ENCODE measurements at regions of chr18 and their contacts with region 1.

Region 1: DNA sequence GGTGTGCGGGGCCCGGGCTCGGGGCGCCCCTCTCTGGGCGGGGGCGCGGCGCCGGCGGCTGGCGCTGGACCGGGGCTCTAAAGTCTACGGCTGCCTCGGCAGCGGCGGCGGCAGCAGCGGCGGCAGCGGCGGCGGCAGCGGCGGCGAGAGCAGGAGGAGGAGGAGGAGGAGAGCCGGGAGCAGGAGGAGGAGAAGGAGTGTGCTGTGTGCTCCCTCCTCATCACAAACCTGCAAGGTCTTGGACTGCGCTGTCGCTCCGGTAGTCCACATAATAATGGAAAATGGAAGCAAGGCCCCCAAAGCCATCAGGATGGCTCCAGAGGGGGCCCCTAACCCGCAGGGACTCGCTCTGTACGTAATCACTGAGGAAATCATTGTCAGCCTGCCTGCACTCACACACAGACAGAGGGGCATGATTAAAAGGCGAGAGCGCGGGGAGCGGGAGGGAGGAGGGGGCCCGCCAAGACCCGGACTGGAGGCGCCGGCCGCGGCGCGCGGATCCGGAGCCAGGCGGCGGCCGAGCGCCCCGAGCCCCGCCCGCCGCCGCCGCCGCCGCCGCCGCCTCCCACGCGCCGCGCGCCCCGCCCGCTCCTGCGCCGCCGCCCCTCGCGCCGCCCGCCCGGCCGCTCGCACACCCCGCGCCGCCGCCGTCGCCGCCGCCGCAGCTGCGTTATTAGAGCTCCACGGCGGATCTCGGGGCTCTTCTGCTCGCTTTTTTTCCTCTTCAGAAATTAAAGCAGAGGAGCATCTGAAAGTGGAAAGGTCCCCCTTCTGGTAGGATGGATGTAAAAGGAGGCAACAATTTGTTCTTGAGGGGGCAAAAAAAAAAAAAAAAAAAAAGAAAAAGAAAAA is at the start of gene ZNF521:
- DNase-seq: peak; percentile 93
- H3K4me3 ChIP-seq: peak within 1 kb of the TSS; percentile 90 to 100 (median 99)
- H3K27ac ChIP-seq: peak within 1 kb of the TSS; percentile 98
- H3K4me1 ChIP-seq: peaks cover 33% of the 10 kb centered on the region
- H3K27me3 ChIP-seq: no peaks in the 10 kb centered on the region
- CTCF ChIP-seq: peak; percentile 23 to 31
- POLR2A ChIP-seq: peak; percentile 88
- total RNA-seq, gene ZNF521: 166 and 168 TPM in 2 replicates

Region 2: GRCh38 chr18:24831871-24832665 is 519.9 kb before region 1 on chr18:
- CTCF ChIA-PET with region 1: interaction called, 4 read pairs
- POLR2A ChIA-PET with region 1: interaction called, 5 read pairs
- dilution Hi-C with region 1: no loop called
- intact Hi-C with region 1: loop called (anchors 1 kb)
- DNase-seq: peak; percentile 98
- H3K4me3 ChIP-seq: no peak overlapping the region
- H3K27ac ChIP-seq: peak overlapping the region; percentile 93
- H3K4me1 ChIP-seq: peaks cover 37% of the 10 kb centered on the region
- H3K27me3 ChIP-seq: peaks cover 0 to 2% of the 10 kb centered on the region in 2 experiments
- CTCF ChIP-seq: no peak
- POLR2A ChIP-seq: peak; percentile 96

Region 3: DNA sequence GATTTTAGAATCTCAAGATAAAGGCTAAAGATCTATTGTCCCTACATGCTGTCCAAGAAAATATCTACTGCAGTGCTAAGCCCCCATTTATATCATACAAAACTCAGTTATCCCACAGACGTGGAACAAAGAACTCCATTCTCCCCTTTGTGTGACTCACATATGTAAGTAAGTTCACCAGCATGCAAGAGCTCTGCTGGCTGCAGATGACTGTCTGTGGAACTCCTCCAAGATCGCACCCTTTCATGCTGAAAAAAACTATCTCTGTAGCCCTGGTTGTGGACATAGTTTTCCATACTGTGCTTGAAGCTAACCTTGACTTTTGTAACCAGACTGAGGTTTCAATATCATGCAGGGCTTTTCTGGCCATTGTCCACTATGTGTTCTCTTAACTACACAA is 207.2 kb before region 1 on chr18:
- CTCF ChIA-PET with region 1: no interaction called
- POLR2A ChIA-PET with region 1: no interaction called
- dilution Hi-C with region 1: no loop called
- intact Hi-C with region 1: loop called (anchors 5 kb)
- DNase-seq: peak; percentile 46
- H3K4me3 ChIP-seq: no peak overlapping the region
- H3K27ac ChIP-seq: no peak overlapping the region
- H3K4me1 ChIP-seq: peaks cover 2% of the 10 kb centered on the region
- H3K27me3 ChIP-seq: no peaks in the 10 kb centered on the region
- CTCF ChIP-seq: no peak
- POLR2A ChIP-seq: no peak

Region 4: GRCh38 chr18:25284861-25285550 is 67.0 kb before region 1 on chr18:
- CTCF ChIA-PET with region 1: no interaction called
- POLR2A ChIA-PET with region 1: no interaction called
- dilution Hi-C with region 1: no loop called
- intact Hi-C with region 1: no loop called
- DNase-seq: no peak
- H3K4me3 ChIP-seq: no peak overlapping the region
- H3K27ac ChIP-seq: no peak overlapping the region
- H3K4me1 ChIP-seq: peaks cover 80% of the 10 kb centered on the region
- H3K27me3 ChIP-seq: no peaks in the 10 kb centered on the region
- CTCF ChIP-seq: no peak
- POLR2A ChIP-seq: no peak

Region 5: DNA sequence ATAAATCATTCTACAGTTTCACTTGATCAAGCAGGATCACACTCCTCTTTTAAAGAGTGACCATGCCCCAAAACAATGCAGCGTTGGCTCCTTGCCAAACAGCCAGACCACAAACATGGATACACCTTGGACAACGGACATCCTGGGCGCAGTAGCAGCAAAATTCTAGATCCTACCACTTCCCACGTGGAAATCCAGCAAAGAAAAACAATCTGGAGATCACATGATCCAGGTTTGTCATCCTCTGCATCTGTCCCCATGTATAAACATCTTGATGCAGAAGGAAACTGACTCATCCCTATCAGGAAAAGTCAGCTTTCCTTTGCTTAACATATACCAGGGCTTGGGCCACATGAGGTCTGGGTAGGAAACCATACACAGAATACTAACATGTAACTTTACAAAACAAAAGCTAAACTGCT is 53.1 kb before region 1 on chr18:
- CTCF ChIA-PET with region 1: interaction called, 5 read pairs
- POLR2A ChIA-PET with region 1: no interaction called
- dilution Hi-C with region 1: no loop called
- intact Hi-C with region 1: loop called (anchors 1 kb)
- DNase-seq: peak; percentile 98
- H3K4me3 ChIP-seq: peak overlapping the region in 1 of 3 experiments; percentile 29
- H3K27ac ChIP-seq: peak overlapping the region; percentile 94
- H3K4me1 ChIP-seq: peaks cover 39% of the 10 kb centered on the region
- H3K27me3 ChIP-seq: no peaks in the 10 kb centered on the region
- CTCF ChIP-seq: no peak
- POLR2A ChIP-seq: peak; percentile 70

Region 6: GRCh38 chr18:25517881-25518715 is 166.1 kb after region 1 on chr18:
- CTCF ChIA-PET with region 1: interaction called, 3 read pairs
- POLR2A ChIA-PET with region 1: no interaction called
- dilution Hi-C with region 1: no loop called
- intact Hi-C with region 1: loop called (anchors 1 kb)
- DNase-seq: peak; percentile 99
- H3K4me3 ChIP-seq: no peak overlapping the region
- H3K27ac ChIP-seq: peak overlapping the region; percentile 91
- H3K4me1 ChIP-seq: peaks cover 37% of the 10 kb centered on the region
- H3K27me3 ChIP-seq: no peaks in the 10 kb centered on the region
- CTCF ChIP-seq: no peak
- POLR2A ChIP-seq: no peak

Region 7: DNA sequence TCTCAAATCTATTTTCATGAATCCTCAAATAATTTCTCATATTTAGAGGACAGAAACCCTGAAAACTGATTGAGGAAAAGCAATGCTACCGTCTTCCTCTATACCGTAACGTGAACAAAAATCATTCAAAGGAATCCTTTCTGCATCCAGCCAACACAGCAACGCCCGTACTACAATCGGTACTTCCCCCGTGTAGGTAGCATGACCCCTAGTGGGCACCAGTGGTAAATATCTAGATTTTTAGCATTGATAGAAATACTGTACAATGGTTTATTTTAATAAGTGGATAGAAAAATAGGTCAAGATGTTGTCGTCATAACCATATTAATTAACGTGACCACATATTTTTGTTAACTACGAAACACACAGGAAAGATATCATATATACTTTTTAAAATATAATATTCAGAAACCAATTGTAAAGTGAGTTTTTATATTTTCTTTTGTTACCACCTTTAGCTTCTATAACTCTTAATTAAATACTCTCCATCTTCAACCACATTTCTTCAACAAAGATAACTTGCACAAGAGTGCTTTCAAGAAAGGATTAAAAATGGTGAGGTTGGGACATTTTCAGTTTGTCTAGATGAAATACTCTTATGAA is 544.3 kb after region 1 on chr18:
- CTCF ChIA-PET with region 1: interaction called, 3 read pairs
- POLR2A ChIA-PET with region 1: interaction called, 3 read pairs
- dilution Hi-C with region 1: no loop called
- intact Hi-C with region 1: loop called (anchors 2 kb)
- DNase-seq: peak; percentile 62
- H3K4me3 ChIP-seq: no peak overlapping the region
- H3K27ac ChIP-seq: no peak overlapping the region
- H3K4me1 ChIP-seq: no peaks in the 10 kb centered on the region
- H3K27me3 ChIP-seq: peaks cover 8 to 13% of the 10 kb centered on the region in 2 experiments
- CTCF ChIP-seq: peak; percentile 61 to 77
- POLR2A ChIP-seq: no peak

Measured in endothelial cell of umbilical vein (primary cell).